HEK293T (cell line): ENCODE measurements at regions of chr1 and their contacts with region 1.

Region 1: DNA sequence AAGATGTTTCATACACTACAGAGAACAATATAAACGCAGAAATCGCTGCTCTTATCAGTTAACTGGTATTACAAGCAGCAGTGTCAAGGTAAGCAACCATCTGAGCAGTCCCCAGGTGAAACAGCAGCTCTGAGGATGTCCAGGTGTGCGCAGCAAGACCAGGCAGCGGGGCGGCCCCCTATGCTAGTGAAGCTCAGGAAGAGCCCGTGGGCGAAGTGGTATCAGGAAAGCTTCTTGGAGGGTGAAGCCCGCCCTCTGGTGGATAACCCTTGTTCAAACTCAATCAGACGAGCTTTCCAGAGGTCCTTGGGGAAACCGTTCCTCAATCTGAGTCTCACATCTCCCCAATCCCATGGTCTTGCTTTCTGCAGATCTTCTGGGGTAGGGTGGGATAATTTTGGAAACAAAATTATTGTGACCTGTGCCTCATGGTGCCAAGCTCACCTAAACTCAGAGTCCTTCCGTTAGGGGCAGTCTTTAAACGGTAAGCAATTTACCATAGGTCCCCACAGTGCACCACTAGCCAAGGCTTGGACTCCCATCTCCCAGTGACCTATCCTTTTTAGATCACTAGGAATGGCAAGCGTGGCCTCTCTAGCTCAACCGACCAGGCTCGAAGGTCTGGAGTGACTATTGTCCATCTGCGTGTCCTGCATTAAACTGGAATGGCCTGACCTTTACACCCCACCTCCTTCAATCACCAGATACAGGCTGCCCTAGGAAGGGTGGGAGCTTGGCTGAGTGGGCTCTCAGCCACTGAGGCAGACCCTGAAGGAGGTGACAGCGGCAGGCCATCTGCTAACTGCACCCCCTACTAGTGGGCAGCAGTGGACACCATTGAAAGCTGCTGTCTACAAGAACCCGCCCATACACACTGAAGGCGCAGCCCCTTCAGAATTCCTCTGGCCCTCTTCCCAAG is 13.6 kb upstream of the FAM110D start:
- DNase-seq: peak; percentile 80

Region 2: GRCh38 chr1:25848531-25848930 is 296.8 kb before region 1 on chr1:
- CTCF ChIA-PET with region 1: no interaction called
- POLR2A ChIA-PET with region 1: no interaction called
- DNase-seq: no peak

Region 3: DNA sequence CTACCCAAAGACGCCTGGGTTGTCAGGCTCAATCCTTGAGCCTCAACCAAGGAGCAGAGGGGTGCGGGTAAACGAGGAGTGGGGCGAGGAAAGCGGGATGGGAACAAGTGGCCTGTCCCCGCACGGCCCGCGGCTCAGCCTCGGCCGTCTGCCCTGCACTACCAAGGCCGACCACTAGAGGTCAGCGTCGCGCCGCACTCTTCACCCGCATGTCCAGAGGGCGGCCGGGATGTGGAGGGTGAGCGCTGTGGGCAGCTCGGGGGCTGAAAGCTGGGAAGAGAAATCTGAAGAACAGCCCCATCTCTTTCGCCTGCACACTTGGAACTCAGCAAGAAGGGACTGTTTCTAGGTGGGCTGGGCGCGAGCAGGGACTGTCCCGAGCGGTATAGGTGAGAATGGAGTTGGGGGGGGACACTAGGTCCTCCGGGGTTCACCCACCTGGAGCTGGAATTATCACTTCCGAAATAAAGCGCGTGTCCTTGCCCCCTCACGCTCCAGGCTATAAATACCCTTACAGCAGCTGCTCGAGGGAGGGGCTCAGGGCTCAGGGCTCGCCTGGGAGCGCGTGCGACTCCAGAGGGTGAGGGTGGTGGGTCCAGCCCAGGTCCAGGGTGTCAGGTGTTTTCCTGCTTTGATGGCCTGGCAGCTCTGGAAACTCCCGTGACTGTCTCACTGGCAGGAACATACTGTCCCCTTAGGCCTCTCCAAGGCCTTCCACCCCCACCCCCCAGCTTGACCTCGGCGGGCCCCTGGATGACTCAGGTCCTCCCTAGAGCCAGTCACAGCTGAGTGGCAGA is 109.1 kb before region 1 on chr1:
- CTCF ChIA-PET with region 1: interaction called, 22 read pairs
- POLR2A ChIA-PET with region 1: interaction called, 12 read pairs
- DNase-seq: peak; percentile 91

Region 4: GRCh38 chr1:26102526-26102925 is 42.8 kb before region 1 on chr1:
- CTCF ChIA-PET with region 1: interaction called, 11 read pairs
- POLR2A ChIA-PET with region 1: no interaction called
- DNase-seq: no peak